Heart right ventricle (tissue), 16 donors: ENCODE measurements at regions of chr10 and their contacts with region 1.

Region 1: GRCh38 chr10:82377608-82378007 is 502.6 kb downstream of the NRG3 start:
- DNase-seq: no peak
- ATAC-seq: peak in 2 of 8 donors; percentile 31 to 34
- H3K4me3 ChIP-seq: no peak overlapping the region
- H3K27ac ChIP-seq: no peak overlapping the region
- H3K4me1 ChIP-seq: peaks cover 0 to 10% (median 0%) of the 10 kb centered on the region in 9 donors
- H3K27me3 ChIP-seq: no peaks in the 10 kb centered on the region
- CTCF ChIP-seq: peak in 6 of 9 donors; percentile 24 to 50 (median 34)

Region 2: DNA sequence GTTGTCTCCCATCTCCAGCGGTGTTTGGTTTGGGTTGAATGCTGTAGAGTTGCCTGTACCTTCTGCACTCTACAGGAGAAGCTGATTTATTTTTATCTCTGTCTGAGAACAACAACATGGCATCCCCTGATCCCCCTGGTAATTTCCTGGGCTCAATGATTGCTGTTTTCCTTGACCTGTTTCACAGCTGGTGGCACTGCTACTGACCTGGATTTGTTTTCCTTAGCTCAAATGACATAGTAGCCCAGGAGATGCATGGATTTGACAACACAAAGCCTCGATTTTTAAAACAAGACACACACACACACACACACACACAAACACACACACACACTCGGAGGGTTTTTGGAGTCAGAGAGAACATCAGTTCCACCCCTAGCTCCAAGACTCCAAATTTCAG is 201.0 kb before region 1 on chr10:
- intact Hi-C with region 1: no loop called
- DNase-seq: no peak
- ATAC-seq: no peak
- H3K4me3 ChIP-seq: no peak overlapping the region
- H3K27ac ChIP-seq: no peak overlapping the region
- H3K4me1 ChIP-seq: no peaks in the 10 kb centered on the region
- H3K27me3 ChIP-seq: no peaks in the 10 kb centered on the region
- CTCF ChIP-seq: no peak

Region 3: DNA sequence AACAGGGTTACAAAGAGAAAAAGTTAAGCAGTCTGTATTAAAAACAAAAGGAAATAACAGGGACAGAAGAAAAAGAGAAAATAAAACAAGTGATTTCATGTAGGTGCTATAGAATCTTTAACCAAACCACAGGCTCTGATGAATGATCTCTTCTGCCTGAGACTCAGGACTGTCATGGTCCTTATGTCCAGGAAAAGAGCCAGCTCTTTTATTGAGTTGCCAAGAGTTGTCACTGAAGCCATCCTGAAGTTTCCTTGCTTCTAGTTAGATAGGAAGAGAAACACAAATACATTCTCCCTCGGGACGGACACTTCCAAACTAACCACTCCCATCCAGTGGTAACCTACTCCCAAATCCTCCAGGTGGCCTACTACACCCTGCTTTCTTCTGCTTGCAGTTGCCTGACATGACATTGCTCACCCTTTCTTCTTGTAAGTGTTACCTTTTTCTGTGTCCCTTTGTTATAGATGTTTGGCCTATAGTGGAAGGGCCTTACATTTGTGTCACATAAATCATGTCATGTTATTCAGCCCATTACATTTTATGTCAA is 155.9 kb before region 1 on chr10:
- intact Hi-C with region 1: loop called in 1 of 10 experiments (anchors 5 kb)
- DNase-seq: no peak
- ATAC-seq: no peak
- H3K4me3 ChIP-seq: no peak overlapping the region
- H3K27ac ChIP-seq: no peak overlapping the region
- H3K4me1 ChIP-seq: no peaks in the 10 kb centered on the region
- H3K27me3 ChIP-seq: no peaks in the 10 kb centered on the region
- CTCF ChIP-seq: peak in 1 of 9 donors; percentile 20